ENCODE measurements at regions of chr9 and their contacts with region 1.

Region 1: DNA sequence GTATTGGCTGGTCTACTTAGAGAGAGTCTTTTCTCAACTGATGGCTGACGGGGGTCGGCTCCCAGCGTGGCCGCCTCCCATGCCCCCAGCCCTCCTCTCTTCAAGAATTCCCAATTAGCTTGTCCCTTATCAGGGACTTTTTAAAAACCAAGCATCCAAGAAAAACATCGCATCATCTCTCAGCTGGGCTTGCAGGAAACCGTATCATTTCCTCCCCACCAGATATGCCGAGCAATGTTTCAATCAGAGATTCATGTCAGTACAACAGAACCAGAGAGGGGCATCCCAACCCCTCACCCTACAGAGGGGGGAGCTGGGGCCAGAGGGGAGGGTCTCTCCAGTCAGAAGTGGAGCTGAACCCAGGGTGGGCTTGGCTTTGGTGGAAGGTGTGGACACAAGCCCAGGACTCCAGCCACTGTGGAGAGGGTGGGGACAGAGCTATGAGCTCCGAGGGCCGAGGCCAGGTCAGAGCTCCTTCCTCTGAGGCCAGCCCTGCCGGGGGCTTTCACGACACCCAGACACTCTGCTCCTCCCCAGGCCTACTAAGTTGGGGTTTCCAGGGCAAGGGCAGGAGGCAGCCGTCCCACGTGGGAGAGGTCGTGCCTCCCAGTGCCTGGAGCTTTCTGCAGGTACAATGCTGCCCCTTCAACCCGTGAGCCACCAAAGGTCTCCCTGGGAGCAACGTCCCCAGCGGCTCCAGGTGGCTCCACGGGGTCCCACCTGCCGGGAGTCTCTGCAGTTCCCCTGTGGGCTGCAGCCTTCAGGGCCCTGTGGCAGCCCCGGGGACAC is 39.0 kb upstream of the TMEM250 start:
- DNase-seq: peak; percentile 75
- H3K4me3 ChIP-seq: no peak overlapping the region
- H3K27ac ChIP-seq: peak overlapping the region; percentile 75
- H3K4me1 ChIP-seq: peaks cover 15% of the 10 kb centered on the region
- H3K27me3 ChIP-seq: peaks cover 0 to 4% of the 10 kb centered on the region in 2 experiments
- CTCF ChIP-seq: no peak
- POLR2A ChIP-seq: no peak

Region 2: DNA sequence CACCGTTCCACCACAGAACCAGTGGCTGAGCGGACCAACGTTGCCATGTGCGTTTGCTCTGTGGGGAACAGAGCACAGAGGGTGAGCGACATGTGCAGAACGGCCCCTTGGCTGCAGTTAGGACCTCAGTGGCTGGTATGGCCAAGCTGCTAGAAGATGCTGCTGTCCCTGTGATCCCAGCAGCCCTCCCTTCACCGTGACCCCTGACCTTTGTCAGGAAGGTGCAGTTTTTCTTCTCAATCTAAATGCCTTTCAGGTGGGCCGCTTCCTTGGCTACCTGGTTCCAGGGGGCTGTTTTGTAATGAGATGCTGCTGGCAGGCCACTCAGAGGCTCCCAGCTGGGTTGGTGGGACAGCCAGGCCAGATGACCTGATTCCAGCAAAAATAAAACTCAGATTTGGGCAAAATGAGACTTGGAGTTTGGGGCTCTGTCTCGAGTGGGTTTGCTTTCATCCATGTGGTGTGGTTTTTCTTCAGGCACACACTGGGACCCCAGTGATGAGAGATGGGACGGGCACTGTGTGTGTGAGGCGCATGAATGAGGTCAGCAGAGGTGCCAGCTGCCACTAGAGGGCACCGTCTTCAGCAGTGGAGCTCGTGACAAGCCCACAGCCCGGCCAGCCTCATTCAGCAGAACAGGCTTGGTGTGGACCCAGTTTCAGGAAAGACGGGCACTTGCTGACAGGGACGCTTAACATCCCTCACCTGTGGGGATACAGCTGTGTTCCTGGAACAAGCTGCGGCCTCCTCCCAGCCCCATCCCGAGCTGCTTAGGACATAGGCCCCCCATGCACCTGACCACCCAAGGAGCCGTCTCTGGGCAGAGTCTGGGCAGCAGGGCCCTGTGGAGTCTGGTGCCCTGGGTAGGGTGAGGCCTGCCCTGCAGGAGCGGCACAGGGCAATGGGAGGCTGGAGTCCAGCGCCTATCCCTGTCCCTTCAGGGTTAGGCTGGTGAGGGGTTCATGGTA is 653.1 kb before region 1 on chr9:
- CTCF ChIA-PET with region 1: no interaction called
- POLR2A ChIA-PET with region 1: no interaction called
- dilution Hi-C with region 1: no loop called
- intact Hi-C with region 1: no loop called
- DNase-seq: peak; percentile 39
- H3K4me3 ChIP-seq: no peak overlapping the region
- H3K27ac ChIP-seq: no peak overlapping the region
- H3K4me1 ChIP-seq: peaks cover 12% of the 10 kb centered on the region
- H3K27me3 ChIP-seq: no peaks in the 10 kb centered on the region
- CTCF ChIP-seq: peak; percentile 82 to 91
- POLR2A ChIP-seq: no peak

Region 3: GRCh38 chr9:136096505-136097001 is 61.1 kb before region 1 on chr9:
- CTCF ChIA-PET with region 1: no interaction called
- POLR2A ChIA-PET with region 1: no interaction called
- dilution Hi-C with region 1: no loop called
- intact Hi-C with region 1: no loop called
- DNase-seq: no peak
- H3K4me3 ChIP-seq: no peak overlapping the region
- H3K27ac ChIP-seq: no peak overlapping the region
- H3K4me1 ChIP-seq: peaks cover 15% of the 10 kb centered on the region
- H3K27me3 ChIP-seq: no peaks in the 10 kb centered on the region
- CTCF ChIP-seq: no peak
- POLR2A ChIP-seq: no peak

Region 4: DNA sequence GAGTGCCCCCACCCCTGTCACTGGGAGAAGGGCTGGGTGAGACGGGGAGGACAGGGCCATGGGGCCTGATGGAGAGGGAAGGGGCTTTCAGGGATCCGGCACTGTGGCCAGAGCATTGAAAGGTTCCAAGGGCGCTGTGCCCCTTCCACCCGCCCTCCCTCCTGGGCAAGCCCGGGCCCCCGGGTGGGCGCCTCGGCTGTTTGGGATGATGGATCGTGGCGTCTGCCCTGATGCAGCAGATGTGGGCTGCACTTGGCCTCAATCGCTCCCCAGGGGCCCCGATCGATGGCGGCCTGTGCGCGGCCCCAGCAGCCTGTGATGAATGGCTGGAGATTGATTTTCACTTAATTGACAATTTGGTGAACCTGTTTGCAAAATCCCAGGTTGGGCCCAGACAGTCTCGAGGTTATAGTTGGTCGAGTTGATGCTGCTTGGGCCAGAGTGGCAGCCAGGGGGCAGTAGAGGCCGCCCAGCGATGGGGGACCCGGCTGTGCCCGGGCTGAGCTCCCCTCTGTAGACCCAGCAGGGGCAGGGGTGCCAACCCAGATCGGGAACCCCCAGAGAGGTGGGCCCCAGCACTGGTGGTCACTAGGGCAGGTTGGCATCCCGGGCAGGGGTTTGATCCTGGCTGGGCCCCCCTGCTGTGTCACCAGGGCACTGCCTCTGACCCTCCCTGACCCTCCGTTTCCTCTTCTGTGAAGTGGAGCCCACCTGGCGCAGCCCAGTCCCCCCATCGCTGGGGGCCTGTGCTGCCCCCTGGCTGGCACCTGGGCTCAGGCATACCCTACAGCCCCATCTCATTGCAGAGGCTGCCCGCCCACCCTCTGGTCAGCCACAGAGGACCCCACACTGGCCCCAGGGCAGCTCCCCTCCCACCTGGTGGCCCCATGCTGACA is 12.6 kb after region 1 on chr9:
- CTCF ChIA-PET with region 1: interaction called, 10 read pairs
- POLR2A ChIA-PET with region 1: no interaction called
- dilution Hi-C with region 1: no loop called
- intact Hi-C with region 1: no loop called
- DNase-seq: no peak
- H3K4me3 ChIP-seq: no peak overlapping the region
- H3K27ac ChIP-seq: no peak overlapping the region
- H3K4me1 ChIP-seq: no peaks in the 10 kb centered on the region
- H3K27me3 ChIP-seq: peaks cover 4% of the 10 kb centered on the region in 2 experiments
- CTCF ChIP-seq: peak; percentile 73 to 83
- POLR2A ChIP-seq: no peak